ENCODE measurements at regions of chr3 and their contacts with region 1.

Region 1: DNA sequence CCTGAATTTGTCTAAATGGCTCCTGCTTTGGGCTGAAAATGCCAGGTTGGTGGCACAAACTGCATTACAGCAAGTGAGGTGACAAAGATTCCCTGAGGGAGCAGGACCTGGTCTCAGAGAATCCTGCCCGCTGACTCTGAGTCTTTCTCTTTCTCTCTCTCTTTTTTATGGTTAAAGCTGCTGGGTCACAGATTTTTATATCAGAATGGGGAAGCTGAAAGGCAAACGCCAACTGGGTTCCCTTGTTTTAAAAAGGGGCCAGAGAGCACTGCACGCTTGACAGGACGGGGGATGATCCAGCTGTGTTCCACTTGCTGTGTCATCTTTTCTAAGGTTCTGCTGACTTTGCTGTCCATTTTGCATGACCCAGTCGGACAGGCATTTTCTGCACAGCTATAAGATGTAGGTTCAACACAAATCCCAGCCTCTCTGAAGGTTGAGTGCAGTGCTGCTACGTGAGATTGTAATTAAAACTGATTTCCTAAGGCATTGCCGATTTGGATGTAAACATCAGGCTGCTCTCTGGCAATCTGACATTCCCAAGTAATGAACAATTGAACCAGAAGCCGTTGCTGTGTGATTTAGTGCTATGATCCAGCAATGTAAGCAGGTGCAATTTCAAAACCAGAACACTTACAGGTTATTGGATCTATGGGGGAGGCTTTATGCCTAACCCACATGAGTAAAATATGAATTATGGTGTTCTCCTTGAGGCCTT is 25.8 kb downstream of the ARHGEF3 start:
- DNase-seq: no peak
- ATAC-seq: no peak
- H3K4me3 ChIP-seq: no peak overlapping the region
- H3K27ac ChIP-seq: no peak overlapping the region
- H3K4me1 ChIP-seq: peaks cover 30% of the 10 kb centered on the region
- H3K27me3 ChIP-seq: no peaks in the 10 kb centered on the region
- CTCF ChIP-seq: no peak
- EP300 ChIP-seq: no peak
- POLR2A ChIP-seq: no peak
- RAD21 ChIP-seq: no peak

Region 2: DNA sequence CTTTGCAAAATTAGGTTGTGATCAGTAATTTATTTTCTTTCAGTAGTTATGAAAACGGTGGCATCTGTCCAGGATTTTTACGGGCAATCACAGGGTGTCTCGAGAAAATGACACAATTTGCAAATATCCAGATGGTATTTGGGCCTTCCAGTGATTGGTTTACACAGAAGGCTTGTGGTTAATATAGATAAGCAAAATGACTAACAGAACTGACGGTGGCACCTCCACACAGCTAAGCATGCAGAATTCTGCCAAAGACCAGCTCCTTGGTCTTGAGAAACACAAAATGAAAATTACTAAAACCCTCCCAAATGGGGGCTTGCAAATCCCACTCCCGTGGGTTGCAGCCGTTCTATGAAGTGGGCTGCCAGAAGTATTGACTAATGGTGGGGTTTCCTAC is 20.2 kb after region 1 on chr3:
- CTCF ChIA-PET with region 1: interaction called, 160 read pairs
- POLR2A ChIA-PET with region 1: interaction called, 14 read pairs
- RAD21 ChIA-PET with region 1: interaction called, 245 read pairs
- SMC1A ChIA-PET with region 1: interaction called, 383 read pairs
- in situ Hi-C with region 1: no loop called
- intact Hi-C with region 1: no loop called
- DNase-seq: no peak
- ATAC-seq: peak; percentile 57
- H3K4me3 ChIP-seq: peak overlapping the region; percentile 12; the same call in 1 of the 2 replicates
- H3K27ac ChIP-seq: no peak overlapping the region; the same call in 1 of the 2 replicates
- H3K4me1 ChIP-seq: peaks cover 14% of the 10 kb centered on the region
- H3K27me3 ChIP-seq: no peaks in the 10 kb centered on the region
- CTCF ChIP-seq: no peak
- EP300 ChIP-seq: no peak
- POLR2A ChIP-seq: no peak
- RAD21 ChIP-seq: no peak

Measured in GM12878 (cell line).